ENCODE measurements at regions of chr4 and their contacts with region 1.

Region 1: DNA sequence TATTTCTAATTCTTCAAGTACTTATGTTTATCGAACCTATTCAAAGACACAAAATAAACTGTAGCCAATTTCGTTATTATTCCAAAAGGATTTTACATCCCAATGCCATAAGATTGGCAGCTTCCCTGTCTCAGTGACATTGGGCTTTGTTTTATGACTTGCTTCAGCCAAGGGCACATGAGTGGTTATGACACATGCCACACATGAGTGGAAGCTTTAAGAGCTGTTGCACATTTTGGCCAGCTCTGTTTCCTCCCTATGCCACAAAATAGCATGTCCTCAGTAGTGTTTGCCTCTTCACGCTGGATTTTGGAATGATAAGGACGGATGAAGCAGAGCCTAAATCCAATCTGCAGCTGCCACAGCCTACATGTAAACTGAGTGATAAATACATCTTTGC is 21.9 kb downstream of the SEC24D start:
- DNase-seq: no peak
- ATAC-seq: no peak
- H3K4me3 ChIP-seq: no peak overlapping the region
- H3K27ac ChIP-seq: no peak overlapping the region
- H3K4me1 ChIP-seq: no peaks in the 10 kb centered on the region
- H3K27me3 ChIP-seq: no peaks in the 10 kb centered on the region
- CTCF ChIP-seq: no peak
- EP300 ChIP-seq: no peak
- POLR2A ChIP-seq: no peak
- RAD21 ChIP-seq: no peak

Region 2: GRCh38 chr4:118825799-118826198 is 11.7 kb after region 1 on chr4:
- CTCF ChIA-PET with region 1: no interaction called
- POLR2A ChIA-PET with region 1: interaction called, 11 read pairs
- in situ Hi-C with region 1: no loop called
- intact Hi-C with region 1: no loop called
- DNase-seq: no peak
- ATAC-seq: no peak
- H3K4me3 ChIP-seq: no peak overlapping the region
- H3K27ac ChIP-seq: no peak overlapping the region
- H3K4me1 ChIP-seq: peaks cover 0 to 9% of the 10 kb centered on the region in 2 experiments; a peak in 3 of 5 replicates
- H3K27me3 ChIP-seq: no peaks in the 10 kb centered on the region
- CTCF ChIP-seq: no peak
- EP300 ChIP-seq: no peak
- POLR2A ChIP-seq: no peak
- RAD21 ChIP-seq: no peak